Endothelial cell of umbilical vein (primary cell): ENCODE measurements at regions of chr12 and their contacts with region 1.

Region 1: DNA sequence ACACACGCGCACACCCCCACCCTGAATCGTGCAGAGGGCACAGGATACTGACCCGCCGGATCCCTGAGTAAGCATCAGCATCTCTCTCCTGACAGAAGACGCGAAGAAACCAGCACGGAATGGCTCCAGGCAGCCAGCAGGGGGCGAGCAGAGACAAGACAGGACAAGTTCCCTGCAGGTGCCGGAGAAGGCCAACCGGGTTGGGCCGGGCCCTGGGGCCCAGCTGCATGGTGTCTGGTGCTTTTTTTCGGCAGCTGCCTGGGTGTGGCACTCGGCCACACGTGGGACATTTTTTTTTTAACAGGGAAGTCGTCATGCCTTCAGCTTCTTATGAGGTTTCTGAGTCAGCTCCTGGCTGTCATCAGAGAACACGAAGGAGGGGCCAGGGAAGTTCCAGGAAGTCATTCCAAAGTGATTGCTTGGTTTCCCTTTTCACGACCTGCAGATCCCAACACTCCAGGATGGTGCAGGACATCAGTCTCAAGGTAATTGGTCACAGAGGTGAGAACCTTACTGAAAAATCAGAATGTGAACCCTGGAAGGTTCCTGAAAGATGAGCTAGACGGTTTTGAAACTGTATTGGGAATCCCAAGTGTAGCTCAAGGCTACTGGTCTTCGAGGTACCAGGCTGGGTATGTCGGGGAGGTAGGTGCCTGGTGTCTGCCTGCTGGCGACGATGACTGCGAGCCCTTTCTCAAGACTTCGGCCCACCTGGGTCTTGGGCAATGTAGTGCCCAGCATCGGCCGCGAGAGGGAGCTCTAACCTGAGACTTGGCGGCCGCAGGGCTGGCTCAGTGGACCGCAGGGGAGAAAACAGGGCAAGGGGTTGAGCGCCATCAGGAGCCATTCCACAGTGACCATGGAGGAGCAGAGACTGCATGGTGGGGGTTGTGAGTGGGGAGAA is 190.8 kb upstream of the PRMT8 start:
- DNase-seq: peak; percentile 79
- H3K4me3 ChIP-seq: no peak overlapping the region
- H3K27ac ChIP-seq: peak overlapping the region; percentile 48
- H3K4me1 ChIP-seq: peaks cover 22% of the 10 kb centered on the region
- H3K27me3 ChIP-seq: no peaks in the 10 kb centered on the region
- CTCF ChIP-seq: peak; percentile 96
- POLR2A ChIP-seq: no peak

Region 2: GRCh38 chr12:2673966-2674810 is 626.0 kb before region 1 on chr12:
- CTCF ChIA-PET with region 1: no interaction called
- POLR2A ChIA-PET with region 1: no interaction called
- dilution Hi-C with region 1: no loop called
- intact Hi-C with region 1: no loop called
- DNase-seq: no peak
- H3K4me3 ChIP-seq: no peak overlapping the region
- H3K27ac ChIP-seq: no peak overlapping the region
- H3K4me1 ChIP-seq: no peaks in the 10 kb centered on the region
- H3K27me3 ChIP-seq: no peaks in the 10 kb centered on the region
- CTCF ChIP-seq: peak in 1 of 2 donors; percentile 29
- POLR2A ChIP-seq: no peak

Region 3: DNA sequence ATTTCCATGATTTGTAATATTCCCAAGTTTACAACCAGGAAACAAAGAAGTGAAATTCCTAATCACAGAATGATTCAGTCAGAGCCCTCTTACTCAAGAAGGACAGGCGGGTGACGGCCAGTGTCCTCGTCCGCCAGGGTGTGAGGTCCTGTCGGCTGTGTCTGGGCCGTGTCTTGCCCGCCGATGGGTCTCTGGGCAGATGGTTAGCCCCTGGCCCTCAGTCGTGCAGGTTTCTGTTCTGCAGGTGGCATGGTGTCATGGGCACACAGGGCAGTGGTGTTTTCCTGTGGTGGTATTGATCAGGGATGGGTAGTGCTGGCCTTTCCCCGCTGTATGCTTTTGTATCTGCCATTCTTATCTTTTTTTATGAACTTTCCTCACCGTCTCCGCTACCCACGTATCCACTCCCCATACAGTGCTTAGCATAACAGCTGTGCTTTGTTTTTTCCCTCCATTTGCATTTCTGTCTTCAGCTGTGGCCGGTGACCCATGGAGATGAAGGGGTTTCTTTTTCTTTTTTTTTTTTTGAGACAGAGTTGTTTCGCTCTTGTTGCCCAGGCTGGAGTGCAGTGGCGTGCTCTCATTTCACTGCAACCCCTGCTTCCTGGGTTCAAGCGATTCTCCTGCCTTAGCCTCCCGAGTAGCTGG is 122.3 kb before region 1 on chr12:
- CTCF ChIA-PET with region 1: no interaction called
- POLR2A ChIA-PET with region 1: no interaction called
- dilution Hi-C with region 1: no loop called
- intact Hi-C with region 1: no loop called
- DNase-seq: no peak
- H3K4me3 ChIP-seq: no peak overlapping the region
- H3K27ac ChIP-seq: no peak overlapping the region
- H3K4me1 ChIP-seq: no peaks in the 10 kb centered on the region
- H3K27me3 ChIP-seq: no peaks in the 10 kb centered on the region
- CTCF ChIP-seq: no peak
- POLR2A ChIP-seq: no peak

Region 4: DNA sequence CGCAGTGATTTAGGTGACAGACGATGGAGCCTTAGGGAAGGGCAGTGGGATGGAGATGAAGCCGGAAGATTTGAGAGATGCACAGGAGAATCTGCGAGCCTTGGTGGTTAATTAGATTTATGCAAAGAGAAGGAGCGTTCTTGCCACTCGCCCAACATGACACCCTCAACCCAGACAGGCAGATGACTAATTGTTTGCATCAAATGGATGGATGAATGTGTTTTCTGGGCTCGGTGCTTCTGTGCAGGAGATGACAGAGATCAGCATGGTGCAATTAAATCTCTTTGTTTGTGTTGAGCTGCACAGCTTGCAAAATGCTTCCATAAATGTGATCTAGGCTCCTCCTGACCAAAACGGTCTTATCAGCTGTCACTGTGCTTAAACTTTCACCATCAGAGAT is 11.5 kb before region 1 on chr12:
- CTCF ChIA-PET with region 1: interaction called, 21 read pairs
- POLR2A ChIA-PET with region 1: interaction called, 3 read pairs
- dilution Hi-C with region 1: no loop called
- intact Hi-C with region 1: no loop called
- DNase-seq: no peak
- H3K4me3 ChIP-seq: no peak overlapping the region
- H3K27ac ChIP-seq: no peak overlapping the region
- H3K4me1 ChIP-seq: no peaks in the 10 kb centered on the region
- H3K27me3 ChIP-seq: no peaks in the 10 kb centered on the region
- CTCF ChIP-seq: no peak
- POLR2A ChIP-seq: no peak

Region 5: DNA sequence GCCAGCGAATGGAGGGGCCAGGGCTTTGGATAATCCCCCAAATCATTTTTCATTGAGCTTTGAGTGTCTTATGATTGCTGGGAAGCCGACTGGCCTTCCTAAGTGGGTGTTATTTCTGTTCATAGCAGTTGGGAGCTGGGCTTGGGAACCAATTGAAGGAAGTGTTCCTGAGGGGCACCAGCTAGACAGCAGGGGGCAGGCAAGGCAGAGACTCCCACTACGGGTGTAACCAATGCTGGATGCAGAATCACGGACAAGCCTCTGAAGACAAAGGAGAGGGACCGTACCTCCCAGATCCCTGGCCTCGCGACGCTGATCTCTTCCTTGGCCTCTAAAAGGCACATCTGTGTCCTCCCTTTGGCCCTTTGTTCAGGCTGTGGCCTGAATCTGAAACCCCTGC is 41.9 kb after region 1 on chr12:
- CTCF ChIA-PET with region 1: interaction called, 27 read pairs
- POLR2A ChIA-PET with region 1: no interaction called
- dilution Hi-C with region 1: no loop called
- intact Hi-C with region 1: no loop called
- DNase-seq: peak; percentile 37
- H3K4me3 ChIP-seq: no peak overlapping the region
- H3K27ac ChIP-seq: no peak overlapping the region
- H3K4me1 ChIP-seq: no peaks in the 10 kb centered on the region
- H3K27me3 ChIP-seq: no peaks in the 10 kb centered on the region
- CTCF ChIP-seq: peak; percentile 23 to 65
- POLR2A ChIP-seq: no peak

Region 6: GRCh38 chr12:3770886-3771285 is 470.7 kb after region 1 on chr12:
- CTCF ChIA-PET with region 1: interaction called, 59 read pairs
- POLR2A ChIA-PET with region 1: no interaction called
- dilution Hi-C with region 1: no loop called
- intact Hi-C with region 1: no loop called
- DNase-seq: peak; percentile 41
- H3K4me3 ChIP-seq: no peak overlapping the region
- H3K27ac ChIP-seq: no peak overlapping the region
- H3K4me1 ChIP-seq: peaks cover 8% of the 10 kb centered on the region
- H3K27me3 ChIP-seq: peaks cover 8% of the 10 kb centered on the region in 2 experiments
- CTCF ChIP-seq: no peak
- POLR2A ChIP-seq: no peak

Region 7: DNA sequence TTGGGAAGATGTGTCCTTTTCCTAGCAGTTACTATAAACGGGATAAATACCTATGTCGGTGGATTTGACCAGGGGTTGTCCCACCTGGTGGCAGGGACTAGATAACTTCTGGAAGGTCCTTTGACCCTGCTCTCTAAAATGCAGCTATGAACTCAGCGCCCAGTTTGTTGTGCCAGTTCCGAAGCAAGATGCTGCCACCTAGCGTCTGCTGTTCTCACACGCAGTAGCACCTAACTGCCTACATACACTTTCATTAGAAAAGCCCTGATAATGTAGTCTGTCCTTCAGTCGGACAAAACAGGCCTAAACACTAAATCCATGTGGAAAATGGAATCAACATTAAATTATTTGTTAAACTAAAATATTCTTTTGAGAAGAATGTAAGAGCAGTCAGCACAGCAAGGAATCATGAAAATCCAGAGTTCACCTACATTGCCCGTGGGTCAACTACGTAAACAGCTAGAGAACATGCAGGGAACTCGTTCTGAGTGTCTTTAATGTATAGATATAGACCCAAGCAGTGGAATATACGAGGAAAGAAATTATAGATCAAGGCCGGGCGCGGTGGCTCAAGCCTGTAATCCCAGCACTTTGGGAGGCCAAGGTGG is 503.8 kb after region 1 on chr12:
- CTCF ChIA-PET with region 1: interaction called, 322 read pairs
- POLR2A ChIA-PET with region 1: no interaction called
- dilution Hi-C with region 1: no loop called
- intact Hi-C with region 1: loop called (anchors 1 kb)
- DNase-seq: peak; percentile 59
- H3K4me3 ChIP-seq: no peak overlapping the region
- H3K27ac ChIP-seq: no peak overlapping the region
- H3K4me1 ChIP-seq: no peaks in the 10 kb centered on the region
- H3K27me3 ChIP-seq: no peaks in the 10 kb centered on the region
- CTCF ChIP-seq: peak; percentile 88 to 90
- POLR2A ChIP-seq: no peak